MCF 10A (cell line): ENCODE measurements at regions of chr7 and their contacts with region 1.

Region 1: DNA sequence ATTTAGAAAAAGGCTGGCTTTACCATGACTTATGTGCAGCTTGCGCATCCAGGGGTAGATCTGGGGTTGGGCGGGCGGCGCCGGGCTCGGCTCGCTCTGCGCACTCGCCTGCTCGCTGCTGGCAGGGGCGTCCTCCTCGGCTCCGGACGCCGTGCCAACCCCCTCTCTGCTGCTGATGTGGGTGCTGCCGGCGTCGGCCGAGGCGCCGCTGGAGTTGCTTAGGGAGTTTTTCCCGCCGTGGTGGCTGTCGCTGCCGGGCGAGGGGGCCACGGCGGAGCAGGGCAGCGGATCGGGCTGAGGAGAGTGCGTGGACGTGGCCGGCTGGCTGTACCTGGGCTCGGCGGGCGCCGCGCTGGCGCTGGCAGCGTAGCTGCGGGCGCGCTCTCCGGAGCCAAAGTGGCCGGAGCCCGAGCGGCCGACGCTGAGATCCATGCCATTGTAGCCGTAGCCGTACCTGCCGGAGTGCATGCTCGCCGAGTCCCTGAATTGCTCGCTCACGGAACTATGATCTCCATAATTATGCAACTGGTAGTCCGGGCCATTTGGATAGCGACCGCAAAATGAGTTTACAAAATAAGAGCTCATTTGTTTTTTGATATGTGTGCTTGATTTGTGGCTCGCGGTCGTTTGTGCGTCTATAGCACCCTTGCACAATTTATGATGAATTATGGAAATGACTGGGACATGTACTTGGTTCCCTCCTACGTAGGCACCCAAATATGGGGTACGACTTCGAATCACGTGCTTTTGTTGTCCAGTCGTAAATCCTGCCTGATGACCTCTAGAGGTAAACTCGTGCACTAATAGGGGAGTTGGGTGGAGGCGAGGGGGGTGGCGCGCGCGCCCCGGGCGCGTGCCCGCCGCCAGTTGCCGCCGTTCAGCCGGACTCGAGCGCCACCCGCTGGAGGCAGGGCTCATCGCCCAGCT is at the start of gene HOXA5:
- DNase-seq: peak; percentile 99
- H3K4me3 Mint-ChIP-seq: peak within 1 kb of the TSS; percentile 100
- H3K27ac Mint-ChIP-seq: peak within 1 kb of the TSS; percentile 99
- H3K4me1 Mint-ChIP-seq: peaks cover 31% of the 10 kb centered on the region
- H3K27me3 Mint-ChIP-seq: no peaks in the 10 kb centered on the region
- CTCF ChIP-seq: peak; percentile 93
- total RNA-seq, gene HOXA5: 7.4 and 8.8 TPM in 2 replicates

Region 2: GRCh38 chr7:26500749-26501352 is 642.4 kb before region 1 on chr7:
- CTCF ChIA-PET with region 1: no interaction called
- POLR2A ChIA-PET with region 1: no interaction called
- intact Hi-C with region 1: loop called (anchors 5 kb)
- DNase-seq: peak; percentile 53
- H3K4me3 Mint-ChIP-seq: no peak overlapping the region
- H3K27ac Mint-ChIP-seq: no peak overlapping the region
- H3K4me1 Mint-ChIP-seq: no peaks in the 10 kb centered on the region
- H3K27me3 Mint-ChIP-seq: no peaks in the 10 kb centered on the region
- CTCF ChIP-seq: peak; percentile 52

Region 3: GRCh38 chr7:26694141-26694540 is 449.1 kb before region 1 on chr7:
- CTCF ChIA-PET with region 1: interaction called, 12 read pairs
- POLR2A ChIA-PET with region 1: interaction called, 27 read pairs
- intact Hi-C with region 1: no loop called
- DNase-seq: no peak
- H3K4me3 Mint-ChIP-seq: no peak overlapping the region
- H3K27ac Mint-ChIP-seq: no peak overlapping the region
- H3K4me1 Mint-ChIP-seq: peaks cover 12% of the 10 kb centered on the region
- H3K27me3 Mint-ChIP-seq: no peaks in the 10 kb centered on the region
- CTCF ChIP-seq: no peak

Region 4: DNA sequence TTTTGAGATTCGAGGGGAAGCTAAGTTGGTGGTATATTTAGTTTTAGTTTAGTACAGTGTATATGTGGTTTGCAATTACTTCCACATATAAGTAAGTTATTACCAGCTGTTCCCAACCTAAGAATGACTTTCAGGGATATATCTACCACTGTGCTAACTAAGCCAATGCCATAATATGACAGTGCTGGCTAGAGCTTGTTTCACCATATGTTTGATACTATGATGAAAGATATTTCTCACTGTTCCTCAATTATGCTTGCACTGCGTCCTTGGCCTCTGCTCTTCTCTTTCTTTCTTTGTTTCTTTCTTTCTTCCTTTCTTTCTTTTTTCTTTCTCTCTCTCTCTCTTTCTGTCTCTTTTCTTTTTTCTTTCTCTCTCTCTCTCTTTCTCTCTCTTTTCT is 165.1 kb before region 1 on chr7:
- CTCF ChIA-PET with region 1: no interaction called
- POLR2A ChIA-PET with region 1: no interaction called
- intact Hi-C with region 1: no loop called
- DNase-seq: no peak
- H3K4me3 Mint-ChIP-seq: no peak overlapping the region
- H3K27ac Mint-ChIP-seq: no peak overlapping the region
- H3K4me1 Mint-ChIP-seq: no peaks in the 10 kb centered on the region
- H3K27me3 Mint-ChIP-seq: no peaks in the 10 kb centered on the region
- CTCF ChIP-seq: no peak

Region 5: DNA sequence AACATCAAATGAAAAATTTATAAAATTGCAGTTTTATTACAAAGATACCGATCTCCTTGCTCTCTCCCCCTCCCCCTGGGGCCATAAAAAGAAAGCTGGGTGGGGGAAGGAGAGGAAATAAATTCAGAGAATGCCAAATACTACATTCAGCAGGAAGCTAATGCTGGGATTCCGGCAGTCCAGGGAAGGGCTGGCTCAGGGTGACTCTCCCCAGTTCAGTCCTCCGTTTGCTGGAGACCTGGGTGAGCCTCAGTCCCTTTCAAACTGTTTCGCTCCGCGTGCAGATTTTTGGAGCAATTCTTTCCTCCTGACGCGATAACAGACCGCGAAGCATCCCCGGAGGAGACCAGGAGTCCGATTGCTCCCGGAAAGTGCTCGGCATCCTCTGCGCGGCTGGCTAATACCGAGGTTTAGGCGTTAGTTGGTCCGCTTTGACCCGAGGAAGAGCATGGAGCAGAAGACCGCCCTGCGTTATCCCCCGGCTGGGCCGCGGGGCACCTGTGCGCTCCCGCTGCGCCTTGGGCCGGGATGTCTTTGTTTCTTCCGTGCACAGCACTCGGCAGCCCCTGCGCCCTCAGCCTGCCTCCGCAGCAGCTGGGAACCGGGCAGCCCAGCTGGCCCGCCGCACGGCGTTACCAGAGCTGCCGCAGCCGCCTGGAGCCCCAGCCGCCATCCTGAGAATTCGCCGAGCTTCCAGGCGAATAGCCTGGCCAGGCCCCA is 36.9 kb before region 1 on chr7:
- CTCF ChIA-PET with region 1: interaction called, 16 read pairs
- POLR2A ChIA-PET with region 1: interaction called, 196 read pairs
- intact Hi-C with region 1: no loop called
- DNase-seq: peak; percentile 42
- H3K4me3 Mint-ChIP-seq: peak overlapping the region; percentile 87
- H3K27ac Mint-ChIP-seq: peak overlapping the region; percentile 99
- H3K4me1 Mint-ChIP-seq: peaks cover 38% of the 10 kb centered on the region
- H3K27me3 Mint-ChIP-seq: no peaks in the 10 kb centered on the region
- CTCF ChIP-seq: no peak

Region 6: DNA sequence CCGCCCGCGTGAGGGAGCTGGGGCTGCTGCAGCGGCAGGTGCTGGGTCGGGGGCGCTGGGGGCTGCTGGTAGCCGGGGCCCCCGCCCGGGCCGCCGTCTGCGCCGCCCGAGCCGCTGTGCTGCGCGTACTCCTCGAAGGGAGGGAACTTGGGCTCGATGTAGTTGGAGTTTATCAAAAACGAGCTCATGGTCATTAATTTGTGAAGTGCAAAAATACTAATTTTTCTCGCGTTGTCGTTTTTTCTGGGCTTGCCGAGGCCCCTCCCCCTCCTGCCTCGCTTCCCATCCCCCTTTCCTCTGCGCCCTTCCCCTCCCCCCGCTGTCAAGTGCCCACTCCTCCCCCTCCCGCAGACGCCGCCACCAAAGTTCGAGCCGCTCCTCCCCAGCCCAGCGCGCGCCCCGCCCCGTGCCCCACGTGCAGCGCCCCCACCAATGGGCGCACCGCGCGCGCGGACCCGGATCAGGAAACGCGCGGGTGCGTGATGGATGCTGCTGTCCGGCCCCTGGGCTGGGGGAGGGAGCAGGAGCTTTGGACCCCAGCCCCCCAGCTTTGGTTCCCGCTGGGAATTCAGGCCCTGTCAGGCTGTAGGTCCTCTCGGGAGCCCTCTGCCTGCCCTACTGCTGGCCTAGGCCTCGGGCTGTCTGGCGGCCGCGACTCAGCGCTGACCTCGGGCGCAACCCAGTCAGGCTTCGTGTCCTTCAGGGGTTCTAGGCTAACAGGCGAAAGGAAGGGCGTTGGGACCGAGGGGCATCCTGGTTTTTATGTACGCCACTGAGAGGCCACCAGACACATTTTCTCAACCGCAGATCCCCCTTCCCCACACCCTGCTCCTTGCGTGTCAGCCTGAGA is 12.5 kb before region 1 on chr7 and contains the start of gene HOXA4:
- CTCF ChIA-PET with region 1: interaction called, 5 read pairs
- POLR2A ChIA-PET with region 1: interaction called, 60 read pairs
- intact Hi-C with region 1: no loop called
- DNase-seq: peak; percentile 93
- H3K4me3 Mint-ChIP-seq: peak within 1 kb of the TSS; percentile 80
- H3K27ac Mint-ChIP-seq: peak within 1 kb of the TSS; percentile 51
- H3K4me1 Mint-ChIP-seq: peaks cover 32% of the 10 kb centered on the region
- H3K27me3 Mint-ChIP-seq: no peaks in the 10 kb centered on the region
- CTCF ChIP-seq: no peak
- total RNA-seq, gene HOXA4: 2.6 and 3.7 TPM in 2 replicates

Region 7: DNA sequence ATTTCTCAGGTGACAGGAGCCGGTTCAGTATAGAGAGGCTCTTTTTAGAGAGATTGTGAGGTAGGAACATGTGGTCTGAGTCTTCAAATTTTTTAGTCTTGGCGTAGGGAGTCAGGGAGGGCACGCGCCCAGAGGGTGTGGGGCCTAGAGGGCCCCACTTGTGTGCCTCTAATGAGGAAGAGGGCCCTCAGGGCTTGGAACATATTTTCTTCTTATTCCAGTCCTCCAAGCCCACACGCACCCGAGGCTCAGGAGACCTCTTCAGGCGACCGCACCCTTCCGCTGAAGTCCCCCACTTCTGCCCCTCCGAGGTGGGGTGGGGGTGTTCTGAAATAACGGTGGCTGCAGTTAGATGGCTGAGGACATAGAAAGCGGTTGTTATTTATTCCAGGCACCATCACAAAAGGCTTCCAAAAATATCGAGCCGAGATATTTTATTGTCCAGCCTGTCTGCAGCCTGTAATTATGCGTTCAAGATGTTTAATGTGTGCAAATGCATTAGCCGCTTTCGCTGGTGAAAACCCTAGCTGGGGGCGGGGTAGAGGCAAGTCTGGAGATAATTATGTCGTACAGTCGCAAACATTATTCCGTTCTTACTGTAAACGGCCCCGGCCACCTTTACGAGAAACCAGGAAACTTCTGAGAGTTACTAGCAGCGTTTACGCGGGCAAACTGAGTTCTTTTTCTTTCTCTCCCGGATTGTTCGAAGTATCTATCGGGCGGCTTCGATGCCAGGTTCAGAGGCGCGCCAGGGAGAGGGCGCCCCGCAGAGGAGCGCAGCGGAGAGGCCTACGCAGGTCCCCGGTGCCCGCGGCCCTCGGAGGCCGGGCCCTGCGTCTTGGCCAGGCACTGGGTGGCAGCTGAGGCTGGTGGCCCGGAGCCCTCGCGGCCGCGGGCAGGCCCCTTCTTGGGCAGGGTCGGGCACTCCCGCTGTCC is 69.5 kb after region 1 on chr7:
- CTCF ChIA-PET with region 1: no interaction called
- POLR2A ChIA-PET with region 1: no interaction called
- intact Hi-C with region 1: no loop called
- DNase-seq: no peak
- H3K4me3 Mint-ChIP-seq: no peak overlapping the region
- H3K27ac Mint-ChIP-seq: no peak overlapping the region
- H3K4me1 Mint-ChIP-seq: no peaks in the 10 kb centered on the region
- H3K27me3 Mint-ChIP-seq: no peaks in the 10 kb centered on the region
- CTCF ChIP-seq: no peak

Region 8: DNA sequence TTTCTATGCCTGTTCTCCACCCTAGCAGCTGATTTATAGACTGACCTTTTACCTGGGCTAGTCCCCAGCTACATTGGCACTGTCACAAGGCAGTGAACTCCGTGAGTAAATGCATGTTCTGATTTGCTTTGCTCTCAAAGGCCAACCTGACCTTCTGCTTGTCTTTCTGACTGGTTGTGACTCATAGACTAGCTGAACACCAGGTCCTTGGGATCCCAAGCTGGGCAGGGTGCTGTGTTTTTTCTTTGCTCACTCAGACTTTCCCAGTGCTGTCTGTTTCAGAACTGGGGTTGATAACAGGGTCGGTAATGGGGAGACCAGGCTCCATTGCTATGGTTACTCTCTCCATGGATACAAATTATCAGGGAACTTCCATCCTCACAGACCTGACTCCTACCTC is 134.3 kb after region 1 on chr7:
- CTCF ChIA-PET with region 1: no interaction called
- POLR2A ChIA-PET with region 1: no interaction called
- intact Hi-C with region 1: no loop called
- DNase-seq: peak; percentile 74
- H3K4me3 Mint-ChIP-seq: no peak overlapping the region
- H3K27ac Mint-ChIP-seq: peak overlapping the region; percentile 36
- H3K4me1 Mint-ChIP-seq: peaks cover 6% of the 10 kb centered on the region
- H3K27me3 Mint-ChIP-seq: no peaks in the 10 kb centered on the region
- CTCF ChIP-seq: no peak

Region 9: DNA sequence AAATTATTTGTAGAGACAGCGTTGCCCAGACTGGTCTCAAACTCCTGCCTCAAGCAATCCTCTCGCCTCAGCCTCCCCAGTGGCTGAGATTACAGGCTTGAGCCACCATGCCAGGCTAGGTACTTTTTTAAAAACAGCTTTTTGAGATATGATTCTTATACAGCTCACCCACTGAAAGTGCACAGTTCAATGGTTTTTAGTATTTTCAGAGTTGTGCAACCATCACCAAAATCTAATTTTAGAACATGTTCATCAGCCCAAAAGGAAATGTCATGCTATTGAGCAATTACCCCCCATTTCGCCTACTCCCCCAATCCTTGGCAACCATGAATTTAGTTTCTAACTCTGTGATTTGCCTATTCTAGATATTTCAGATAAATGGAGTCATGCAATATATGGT is 173.0 kb after region 1 on chr7:
- CTCF ChIA-PET with region 1: no interaction called
- POLR2A ChIA-PET with region 1: no interaction called
- intact Hi-C with region 1: no loop called
- DNase-seq: peak; percentile 33
- H3K4me3 Mint-ChIP-seq: no peak overlapping the region
- H3K27ac Mint-ChIP-seq: no peak overlapping the region
- H3K4me1 Mint-ChIP-seq: peaks cover 6% of the 10 kb centered on the region
- H3K27me3 Mint-ChIP-seq: peaks cover 19% of the 10 kb centered on the region
- CTCF ChIP-seq: no peak